ENCODE measurements at regions of chr22 and their contacts with region 1.

Region 1: DNA sequence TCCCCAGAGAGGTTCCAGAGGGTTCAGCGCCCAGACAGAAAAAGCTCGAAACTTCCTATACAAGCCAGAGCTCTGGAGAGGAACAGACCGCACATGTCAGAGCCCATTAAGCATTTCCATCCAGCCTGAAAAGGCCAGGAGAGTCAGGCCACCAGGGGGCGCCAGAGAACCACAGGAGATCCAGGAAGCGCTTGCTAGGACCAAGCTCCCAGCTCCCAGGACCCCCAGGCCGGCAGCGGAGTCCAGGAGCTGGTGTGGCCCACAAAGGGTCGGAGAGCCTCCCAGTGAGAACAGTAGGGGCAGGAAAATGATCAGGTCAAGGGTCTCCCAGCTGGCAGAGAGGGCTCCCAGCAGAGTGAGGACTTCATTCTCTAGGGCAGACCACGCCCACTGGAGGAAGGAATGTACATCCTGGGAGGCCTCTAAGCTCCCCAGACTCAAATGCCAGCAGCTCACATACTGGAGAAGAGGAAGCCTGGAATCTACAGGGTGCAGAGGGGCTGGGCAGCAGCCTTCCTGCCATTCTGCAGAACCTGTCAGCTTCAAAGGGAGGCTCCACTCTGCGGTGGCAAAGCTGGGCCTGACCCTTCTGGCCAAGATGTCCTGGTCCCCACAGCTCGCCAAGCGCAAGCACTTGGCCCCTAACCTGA is 2.1 kb upstream of the MEI1 start:
- DNase-seq: peak; percentile 74 to 97
- H3K4me3 ChIP-seq: no peak overlapping the region
- H3K4me1 ChIP-seq: peaks cover 5% of the 10 kb centered on the region; the same call in 1 of the 2 replicates
- H3K27me3 ChIP-seq: no peaks in the 10 kb centered on the region

Region 2: DNA sequence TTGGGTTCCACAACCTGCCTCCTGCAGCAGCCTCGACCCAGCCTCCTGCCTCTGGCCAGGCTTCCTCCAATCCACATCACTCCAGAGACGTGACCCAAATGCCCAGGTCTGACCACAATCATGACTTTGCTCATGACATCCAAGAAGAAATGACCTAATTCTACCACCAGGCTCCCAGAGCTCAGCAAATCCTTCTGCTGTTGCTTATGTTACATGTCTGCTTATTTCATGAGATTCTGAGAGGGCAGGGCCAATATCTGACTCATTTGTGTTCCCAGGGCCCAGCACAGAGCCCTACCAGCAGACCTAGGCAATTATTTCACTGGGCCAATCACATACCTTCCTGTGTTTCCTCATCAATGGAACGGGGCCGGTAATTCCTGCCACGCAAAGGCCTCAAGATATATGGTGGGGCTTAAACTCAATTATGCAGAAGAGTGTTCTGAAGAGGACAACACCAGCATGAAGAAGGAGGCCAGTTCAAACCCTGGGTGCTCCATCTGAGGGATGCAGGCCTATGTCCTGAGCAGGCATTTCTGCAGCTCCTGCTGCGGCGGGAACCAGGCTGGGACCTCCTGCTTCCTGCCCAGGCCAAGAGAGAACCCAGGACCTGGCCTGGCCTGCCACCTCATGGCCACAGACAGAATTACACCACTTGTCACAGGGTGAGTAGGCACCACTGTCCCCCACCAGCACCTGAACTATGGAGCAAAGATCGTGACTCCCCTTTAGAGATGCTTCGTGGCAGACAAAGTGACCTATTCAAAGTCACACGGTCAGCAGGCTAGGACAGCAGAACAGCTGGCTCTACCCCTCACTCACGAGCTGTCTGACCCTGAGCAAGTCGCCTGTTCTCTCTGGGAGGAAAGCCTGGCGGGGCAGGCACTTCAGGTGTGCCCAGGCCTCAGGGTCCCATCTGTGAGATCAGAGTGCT is 243.8 kb after region 1 on chr22:
- in situ Hi-C with region 1: loop called (anchors 5 kb)
- DNase-seq: peak; percentile 65 to 87
- H3K4me3 ChIP-seq: no peak overlapping the region
- H3K4me1 ChIP-seq: peaks cover 10% of the 10 kb centered on the region
- H3K27me3 ChIP-seq: no peaks in the 10 kb centered on the region